ENCODE measurements at regions of chr10 and their contacts with region 1.

Region 1: GRCh38 chr10:80509403-80510161 is 28.1 kb upstream of the SH2D4B start:
- DNase-seq: no peak
- H3K4me3 ChIP-seq: no peak overlapping the region
- CTCF ChIP-seq: no peak
- POLR2A ChIP-seq: no peak

Region 2: DNA sequence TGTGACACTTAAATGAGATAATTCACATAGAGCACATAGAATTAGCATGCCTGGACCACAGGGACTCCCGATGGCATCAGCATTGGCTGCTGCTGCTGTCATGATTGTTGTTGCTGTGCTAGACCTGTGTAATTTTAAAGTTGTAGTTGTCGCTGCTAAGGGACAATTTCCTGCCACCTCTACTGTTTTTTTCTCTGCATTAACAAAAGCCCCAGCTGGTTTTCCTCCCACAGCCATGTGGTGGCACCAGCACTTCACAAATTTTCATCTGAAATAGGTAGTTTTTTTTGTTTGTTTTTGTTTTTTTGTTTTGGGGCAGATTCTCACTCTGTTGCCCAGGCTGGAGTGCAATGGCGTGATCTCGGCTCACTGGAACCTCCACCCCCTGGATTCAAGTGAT is 126.6 kb before region 1 on chr10:
- intact Hi-C with region 1: loop called (anchors 10 kb)
- DNase-seq: no peak
- H3K4me3 ChIP-seq: no peak overlapping the region
- CTCF ChIP-seq: no peak
- POLR2A ChIP-seq: no peak

Region 3: GRCh38 chr10:80444646-80445319 is 64.8 kb before region 1 on chr10:
- intact Hi-C with region 1: loop called (anchors 5 kb)
- DNase-seq: no peak
- H3K4me3 ChIP-seq: no peak overlapping the region
- CTCF ChIP-seq: peak in 1 of 3 donors; percentile 31
- POLR2A ChIP-seq: no peak

Region 4: DNA sequence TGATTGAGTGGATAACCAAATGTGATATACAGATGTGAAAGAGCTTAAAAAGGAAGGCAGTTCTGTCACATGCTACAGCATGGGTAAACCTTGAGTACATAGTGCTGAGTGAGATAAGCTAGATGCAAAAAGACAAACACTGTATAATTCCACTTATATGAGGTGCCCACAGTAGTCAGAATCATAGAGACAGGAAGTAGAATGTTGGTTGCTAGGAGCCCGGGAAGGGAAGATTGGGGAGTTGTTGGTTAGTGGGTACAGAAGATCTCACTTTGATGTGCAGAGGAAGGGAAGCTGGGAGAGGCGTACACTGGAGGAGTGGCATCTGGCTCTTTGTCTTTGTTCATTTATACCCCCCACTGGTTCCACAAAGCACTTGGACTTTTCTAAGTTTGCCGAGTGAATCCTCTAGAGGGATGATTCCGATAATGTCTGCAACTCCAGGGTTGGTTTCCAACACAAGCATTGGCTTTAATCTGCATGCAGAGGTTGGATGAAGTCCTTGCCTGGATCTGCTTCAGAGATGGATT is 16.0 kb before region 1 on chr10:
- intact Hi-C with region 1: no loop called
- DNase-seq: peak in 1 of 2 donors; percentile 73
- H3K4me3 ChIP-seq: no peak overlapping the region
- CTCF ChIP-seq: no peak
- POLR2A ChIP-seq: no peak

Region 5: GRCh38 chr10:80805343-80806020 is 295.9 kb after region 1 on chr10:
- intact Hi-C with region 1: no loop called
- DNase-seq: no peak
- H3K4me3 ChIP-seq: no peak overlapping the region
- CTCF ChIP-seq: no peak
- POLR2A ChIP-seq: no peak

Measured in lower leg skin (tissue), 4 donors.